GM12878 (cell line): ENCODE measurements at regions of chr9 and their contacts with region 1.

Region 1: GRCh38 chr9:70340572-70340971 is 73.9 kb downstream of the KLF9 start:
- DNase-seq: no peak
- ATAC-seq: no peak
- H3K4me3 ChIP-seq: no peak overlapping the region
- H3K27ac ChIP-seq: no peak overlapping the region
- H3K4me1 ChIP-seq: no peaks in the 10 kb centered on the region
- H3K27me3 ChIP-seq: no peaks in the 10 kb centered on the region
- CTCF ChIP-seq: peak in 1 of 3 experiments; percentile 33; a peak in 2 of 6 replicates
- EP300 ChIP-seq: no peak
- POLR2A ChIP-seq: no peak
- RAD21 ChIP-seq: peak; percentile 45

Region 2: GRCh38 chr9:70218767-70219166 is 121.8 kb before region 1 on chr9:
- CTCF ChIA-PET with region 1: no interaction called
- POLR2A ChIA-PET with region 1: no interaction called
- RAD21 ChIA-PET with region 1: no interaction called
- SMC1A ChIA-PET with region 1: no interaction called
- in situ Hi-C with region 1: no loop called
- intact Hi-C with region 1: no loop called
- DNase-seq: no peak
- ATAC-seq: no peak
- H3K4me3 ChIP-seq: no peak overlapping the region
- H3K27ac ChIP-seq: no peak overlapping the region
- H3K4me1 ChIP-seq: no peaks in the 10 kb centered on the region
- H3K27me3 ChIP-seq: no peaks in the 10 kb centered on the region
- CTCF ChIP-seq: no peak
- EP300 ChIP-seq: no peak
- POLR2A ChIP-seq: no peak
- RAD21 ChIP-seq: no peak

Region 3: GRCh38 chr9:70352802-70353201 is 12.2 kb after region 1 on chr9:
- CTCF ChIA-PET with region 1: interaction called, 10 read pairs
- POLR2A ChIA-PET with region 1: no interaction called
- RAD21 ChIA-PET with region 1: interaction called, 6 read pairs
- SMC1A ChIA-PET with region 1: no interaction called
- in situ Hi-C with region 1: no loop called
- intact Hi-C with region 1: no loop called
- DNase-seq: no peak
- ATAC-seq: no peak
- H3K4me3 ChIP-seq: no peak overlapping the region
- H3K27ac ChIP-seq: no peak overlapping the region
- H3K4me1 ChIP-seq: no peaks in the 10 kb centered on the region
- H3K27me3 ChIP-seq: no peaks in the 10 kb centered on the region
- CTCF ChIP-seq: peak; percentile 43 to 47 (median 45); a peak in 5 of 6 replicates
- EP300 ChIP-seq: no peak
- POLR2A ChIP-seq: no peak
- RAD21 ChIP-seq: peak; percentile 59

Region 4: GRCh38 chr9:70510157-70510770 is 169.7 kb after region 1 on chr9:
- CTCF ChIA-PET with region 1: interaction called, 9 read pairs
- POLR2A ChIA-PET with region 1: no interaction called
- RAD21 ChIA-PET with region 1: no interaction called
- SMC1A ChIA-PET with region 1: interaction called, 11 read pairs
- in situ Hi-C with region 1: no loop called
- intact Hi-C with region 1: no loop called
- DNase-seq: no peak
- ATAC-seq: peak; percentile 72
- H3K4me3 ChIP-seq: no peak overlapping the region
- H3K27ac ChIP-seq: no peak overlapping the region
- H3K4me1 ChIP-seq: no peaks in the 10 kb centered on the region
- H3K27me3 ChIP-seq: no peaks in the 10 kb centered on the region; a peak in 1 of 4 replicates
- CTCF ChIP-seq: peak; percentile 13 to 49 (median 47); a peak in 5 of 6 replicates
- EP300 ChIP-seq: no peak
- POLR2A ChIP-seq: no peak
- RAD21 ChIP-seq: 0 out of 2 replicates have a peak, but pooled peaks have one; percentile 11